ENCODE measurements at regions of chr21 and their contacts with region 1.

Region 1: DNA sequence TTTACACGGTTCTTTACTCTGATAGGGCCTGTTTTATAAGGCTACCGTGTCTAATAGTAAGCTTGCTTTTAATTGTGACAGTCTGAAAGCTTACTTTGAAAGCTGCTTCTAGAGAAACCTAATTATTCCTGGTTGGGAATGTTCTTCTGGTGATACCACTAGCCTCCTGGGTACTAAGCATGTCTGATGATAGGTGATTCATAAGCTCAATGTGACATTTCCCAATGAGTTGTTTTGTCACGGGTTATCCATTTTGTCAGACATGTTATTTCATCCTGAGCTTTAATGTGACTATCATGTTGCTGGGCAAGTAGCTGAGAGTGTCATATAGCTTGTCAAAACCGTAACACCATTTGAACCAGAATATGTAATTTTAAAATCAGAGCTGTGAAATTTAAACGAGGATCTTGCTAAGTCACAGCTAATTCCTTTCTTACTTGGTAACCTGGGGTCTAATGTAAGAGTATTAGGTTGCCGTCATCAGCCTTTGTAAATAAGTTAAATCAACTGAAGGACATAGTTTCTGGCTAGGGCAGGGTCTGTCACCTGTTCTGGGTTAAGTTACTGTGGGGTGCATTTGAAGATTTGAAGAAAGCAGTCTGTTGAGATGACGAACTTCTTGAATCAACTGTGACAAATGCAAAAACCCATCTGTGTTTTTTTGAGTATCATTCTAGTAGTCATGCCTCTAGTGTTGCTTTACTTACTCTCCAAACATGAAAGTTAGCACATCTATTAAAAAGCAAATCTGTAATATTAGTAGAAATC is 529.2 kb downstream of the USP25 start:
- DNase-seq: no peak
- ATAC-seq: no peak
- H3K4me3 ChIP-seq: no peak overlapping the region
- H3K27ac ChIP-seq: no peak overlapping the region
- H3K4me1 ChIP-seq: no peaks in the 10 kb centered on the region
- H3K27me3 ChIP-seq: no peaks in the 10 kb centered on the region
- CTCF ChIP-seq: no peak
- POLR2A ChIP-seq: no peak
- RAD21 ChIP-seq: no peak

Region 2: DNA sequence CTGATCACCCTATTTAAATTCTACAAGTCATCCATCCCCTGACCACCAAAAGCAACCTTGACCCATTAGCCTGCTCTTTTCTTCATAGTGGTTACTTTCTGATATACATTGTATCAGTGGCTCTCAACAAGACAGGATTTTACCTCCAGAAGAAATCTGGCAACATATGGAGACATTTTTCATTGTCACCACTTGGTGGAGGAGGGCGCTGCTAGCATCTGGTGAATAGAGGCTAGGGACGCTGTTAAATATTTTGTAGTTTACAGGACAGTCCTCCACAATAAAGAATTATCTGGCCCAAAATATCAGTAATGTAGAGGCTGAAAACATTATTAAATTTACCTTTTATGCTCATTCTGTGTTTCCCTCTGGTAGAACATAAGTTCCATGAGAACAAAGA is 1882.2 kb before region 1 on chr21:
- CTCF ChIA-PET with region 1: interaction called, 3 read pairs
- POLR2A ChIA-PET with region 1: no interaction called
- dilution Hi-C with region 1: no loop called
- in situ Hi-C with region 1: no loop called
- intact Hi-C with region 1: loop called (anchors 5 kb)
- DNase-seq: no peak
- ATAC-seq: no peak
- H3K4me3 ChIP-seq: no peak overlapping the region
- H3K27ac ChIP-seq: no peak overlapping the region
- H3K4me1 ChIP-seq: no peaks in the 10 kb centered on the region
- H3K27me3 ChIP-seq: no peaks in the 10 kb centered on the region
- CTCF ChIP-seq: no peak
- POLR2A ChIP-seq: no peak
- RAD21 ChIP-seq: no peak

Region 3: GRCh38 chr21:16002874-16003466 is 256.1 kb before region 1 on chr21:
- CTCF ChIA-PET with region 1: no interaction called
- POLR2A ChIA-PET with region 1: no interaction called
- dilution Hi-C with region 1: no loop called
- in situ Hi-C with region 1: no loop called
- intact Hi-C with region 1: loop called (anchors 5 kb)
- DNase-seq: peak; percentile 51
- ATAC-seq: peak; percentile 75; the same call in 1 of the 2 replicates
- H3K4me3 ChIP-seq: no peak overlapping the region
- H3K27ac ChIP-seq: no peak overlapping the region
- H3K4me1 ChIP-seq: no peaks in the 10 kb centered on the region
- H3K27me3 ChIP-seq: no peaks in the 10 kb centered on the region
- CTCF ChIP-seq: peak; percentile 67
- POLR2A ChIP-seq: no peak
- RAD21 ChIP-seq: peak; percentile 67

Region 4: GRCh38 chr21:16102113-16102512 is 156.9 kb before region 1 on chr21:
- CTCF ChIA-PET with region 1: no interaction called
- POLR2A ChIA-PET with region 1: no interaction called
- dilution Hi-C with region 1: no loop called
- in situ Hi-C with region 1: no loop called
- intact Hi-C with region 1: no loop called
- DNase-seq: no peak
- ATAC-seq: no peak
- H3K4me3 ChIP-seq: no peak overlapping the region
- H3K27ac ChIP-seq: no peak overlapping the region
- H3K4me1 ChIP-seq: no peaks in the 10 kb centered on the region
- H3K27me3 ChIP-seq: no peaks in the 10 kb centered on the region
- CTCF ChIP-seq: no peak
- POLR2A ChIP-seq: no peak
- RAD21 ChIP-seq: no peak

Region 5: DNA sequence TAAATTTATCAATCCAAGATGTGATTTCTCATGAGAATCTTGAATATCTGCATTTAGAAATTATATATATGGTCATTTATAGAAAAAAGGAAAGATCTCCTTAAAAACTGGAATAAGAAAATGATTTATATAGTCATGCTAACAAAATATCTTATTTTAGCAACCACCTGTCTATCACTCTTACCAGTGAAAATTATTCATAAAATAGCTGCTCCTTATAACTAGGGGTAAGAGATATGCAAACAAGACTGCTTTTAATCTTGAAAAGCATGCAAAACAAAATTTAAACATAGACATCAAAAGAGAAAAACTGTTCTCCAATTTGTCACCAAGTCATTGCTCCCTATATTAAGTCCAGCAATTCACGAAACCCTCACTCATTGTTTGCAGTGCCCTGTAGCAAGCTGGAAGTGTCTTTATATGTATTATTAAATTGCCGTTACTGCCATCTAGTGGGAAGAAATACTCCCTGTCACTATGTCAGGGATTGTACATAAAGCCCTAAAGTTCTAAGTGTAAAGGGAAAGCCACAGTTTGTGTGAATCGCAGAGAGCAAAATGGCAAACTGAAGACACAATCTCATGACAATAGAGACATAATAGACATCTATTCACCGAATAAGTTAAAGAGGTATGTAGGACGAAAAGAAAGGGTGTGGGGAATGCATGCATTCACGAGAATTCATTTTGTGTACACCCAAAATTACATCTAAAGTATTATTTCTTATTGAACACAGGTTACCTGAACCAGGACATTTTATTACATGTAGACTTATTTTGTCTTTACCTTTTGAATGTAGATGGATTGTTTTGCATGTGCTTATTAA is 71.3 kb after region 1 on chr21:
- CTCF ChIA-PET with region 1: no interaction called
- POLR2A ChIA-PET with region 1: no interaction called
- dilution Hi-C with region 1: no loop called
- in situ Hi-C with region 1: no loop called
- intact Hi-C with region 1: no loop called
- DNase-seq: peak; percentile 75
- ATAC-seq: peak; percentile 97
- H3K4me3 ChIP-seq: no peak overlapping the region
- H3K27ac ChIP-seq: no peak overlapping the region
- H3K4me1 ChIP-seq: no peaks in the 10 kb centered on the region
- H3K27me3 ChIP-seq: no peaks in the 10 kb centered on the region
- CTCF ChIP-seq: peak; percentile 78
- POLR2A ChIP-seq: no peak
- RAD21 ChIP-seq: peak; percentile 70

Measured in IMR-90 (cell line).